A549 (cell line): ENCODE measurements at regions of chr3 and their contacts with region 1.

Region 1: GRCh38 chr3:94062431-94063404 is at the starts of genes DHFR2 and NSUN3:
- DNase-seq: peak; percentile 88 to 98
- ATAC-seq: peak; percentile 97 to 98
- H3K4me3 ChIP-seq: peak within 1 kb of the TSS; percentile 56
- H3K27ac ChIP-seq: peak within 1 kb of the TSS; percentile 94 to 96
- H3K4me1 ChIP-seq: peaks cover 18% of the 10 kb centered on the region; the same call in 2 of the 3 replicates
- CTCF ChIP-seq: no peak
- EP300 ChIP-seq: no peak
- POLR2A ChIP-seq: peak; percentile 79
- RAD21 ChIP-seq: no peak
- polyA plus RNA-seq, gene DHFR2: 5.4 and 6.2 TPM in 2 replicates
- polyA plus RNA-seq, gene NSUN3: 13.5 and 22.5 TPM in 2 replicates

Region 2: DNA sequence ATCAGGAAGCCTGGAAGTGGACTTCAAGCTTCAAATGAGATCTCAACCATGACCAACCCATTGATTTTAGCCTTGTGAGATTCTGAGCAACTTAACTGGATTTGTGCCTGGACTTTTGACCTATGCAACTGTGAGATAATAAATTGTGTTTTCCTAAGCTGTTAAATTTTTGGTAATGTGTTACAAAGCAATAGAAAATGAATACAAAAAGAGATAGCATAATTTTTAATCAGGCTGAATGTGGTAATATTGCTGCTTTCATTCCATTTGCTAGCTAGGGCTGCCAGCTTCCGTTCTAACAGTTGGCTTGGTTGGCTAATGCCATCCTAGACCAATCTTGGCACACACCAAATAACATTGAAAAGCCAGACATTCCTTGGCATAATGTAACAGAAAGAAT is 101.2 kb before region 1 on chr3:
- CTCF ChIA-PET with region 1: no interaction called
- POLR2A ChIA-PET with region 1: no interaction called
- DNase-seq: no peak
- ATAC-seq: no peak
- H3K4me3 ChIP-seq: no peak overlapping the region
- H3K27ac ChIP-seq: no peak overlapping the region
- H3K4me1 ChIP-seq: no peaks in the 10 kb centered on the region
- CTCF ChIP-seq: no peak
- EP300 ChIP-seq: no peak
- POLR2A ChIP-seq: no peak
- RAD21 ChIP-seq: no peak

Region 3: DNA sequence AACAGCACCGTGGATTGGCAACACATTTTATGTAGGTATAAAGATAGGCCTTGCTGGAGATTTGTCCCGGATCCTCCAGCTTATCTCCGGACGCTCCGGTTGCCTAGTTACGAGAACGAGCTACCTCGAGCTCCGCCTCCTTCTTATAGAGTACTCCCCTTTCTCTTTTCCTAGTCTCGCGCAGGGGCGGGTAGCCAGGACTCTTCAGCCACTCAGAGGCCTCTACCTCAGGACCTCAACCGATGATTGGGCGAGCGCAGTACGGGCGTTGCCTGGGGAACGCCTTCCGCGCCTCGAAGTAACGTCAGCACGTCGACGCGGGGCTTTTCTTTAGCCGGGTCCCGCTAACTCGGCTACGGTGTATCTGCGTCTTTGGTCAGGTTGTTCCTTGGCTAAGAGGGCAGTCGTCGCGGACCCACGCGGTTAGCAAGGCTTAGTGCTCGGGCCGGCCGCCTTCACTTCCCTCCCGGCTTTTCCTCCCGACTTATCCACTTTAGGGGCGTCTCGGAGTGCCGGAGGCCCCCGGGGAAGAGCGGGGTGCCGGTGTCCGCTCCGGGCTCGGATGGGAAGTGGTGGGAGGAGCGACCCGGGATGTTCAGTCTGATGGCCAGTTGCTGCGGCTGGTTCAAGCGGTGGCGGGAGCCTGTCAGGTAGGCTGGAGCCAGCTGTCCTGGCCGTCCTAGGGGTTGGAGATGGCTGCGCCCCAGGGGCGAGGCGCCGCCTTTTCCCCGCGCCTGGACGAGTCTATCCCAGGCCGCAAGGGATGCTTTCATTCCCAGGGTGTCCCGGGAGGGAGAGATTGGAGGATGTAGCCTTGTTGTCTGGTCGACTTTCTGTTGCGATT is 82.7 kb before region 1 on chr3 and contains the start of gene ARL13B:
- CTCF ChIA-PET with region 1: no interaction called
- POLR2A ChIA-PET with region 1: interaction called, 20 read pairs
- DNase-seq: peak; percentile 97 to 98
- ATAC-seq: peak; percentile 99 to 100
- H3K4me3 ChIP-seq: peak within 1 kb of the TSS; percentile 83
- H3K27ac ChIP-seq: peak within 1 kb of the TSS; percentile 83 to 93
- H3K4me1 ChIP-seq: peaks cover 20% of the 10 kb centered on the region
- CTCF ChIP-seq: no peak
- EP300 ChIP-seq: no peak
- POLR2A ChIP-seq: peak; percentile 91
- RAD21 ChIP-seq: no peak
- polyA plus RNA-seq, gene ARL13B: 16.1 and 28.6 TPM in 2 replicates

Region 4: GRCh38 chr3:94082391-94082937 is 19.7 kb after region 1 on chr3:
- CTCF ChIA-PET with region 1: no interaction called
- POLR2A ChIA-PET with region 1: no interaction called
- DNase-seq: no peak
- ATAC-seq: no peak
- H3K4me3 ChIP-seq: no peak overlapping the region
- H3K27ac ChIP-seq: no peak overlapping the region
- H3K4me1 ChIP-seq: no peaks in the 10 kb centered on the region
- CTCF ChIP-seq: no peak
- EP300 ChIP-seq: no peak
- POLR2A ChIP-seq: no peak
- RAD21 ChIP-seq: no peak

Region 5: GRCh38 chr3:94127115-94127514 is 64.4 kb after region 1 on chr3:
- CTCF ChIA-PET with region 1: no interaction called
- POLR2A ChIA-PET with region 1: no interaction called
- DNase-seq: no peak
- ATAC-seq: no peak
- H3K4me3 ChIP-seq: no peak overlapping the region
- H3K27ac ChIP-seq: no peak overlapping the region
- H3K4me1 ChIP-seq: no peaks in the 10 kb centered on the region
- CTCF ChIP-seq: no peak
- EP300 ChIP-seq: no peak
- POLR2A ChIP-seq: no peak
- RAD21 ChIP-seq: no peak